H1 (cell line): ENCODE measurements at regions of chr1 and their contacts with region 1.

Region 1: GRCh38 chr1:12078938-12079861 is 16.1 kb downstream of the TNFRSF8 start:
- DNase-seq: peak in 1 of 2 experiments; percentile 86
- H3K4me3 ChIP-seq: peak overlapping the region in 3 of 4 experiments; percentile 18 to 44 (median 34); a peak in 5 of 8 replicates
- H3K27ac ChIP-seq: no peak overlapping the region; the same call in 1 of the 2 replicates
- H3K4me1 ChIP-seq: peaks cover 3 to 22% (median 6%) of the 10 kb centered on the region in 4 experiments
- H3K27me3 ChIP-seq: no peaks in the 10 kb centered on the region
- CTCF ChIP-seq: peak; percentile 73 to 90 (median 80)
- EP300 ChIP-seq: no peak
- POLR2A ChIP-seq: peak in 1 of 2 experiments; percentile 33; a peak in 2 of 3 replicates
- RAD21 ChIP-seq: peak; percentile 57 to 70

Region 2: GRCh38 chr1:11979851-11980675 is 99.1 kb before region 1 on chr1 and contains the start of gene MFN2:
- CTCF ChIA-PET with region 1: no interaction called
- POLR2A ChIA-PET with region 1: interaction called, 10 read pairs
- DNase-seq: peak; percentile 97
- H3K4me3 ChIP-seq: peak within 1 kb of the TSS; percentile 78 to 94 (median 84)
- H3K27ac ChIP-seq: peak within 1 kb of the TSS; percentile 96
- H3K4me1 ChIP-seq: peaks cover 0 to 5% (median 2%) of the 10 kb centered on the region in 4 experiments; a peak in 3 of 7 replicates
- H3K27me3 ChIP-seq: no peaks in the 10 kb centered on the region
- CTCF ChIP-seq: no peak
- EP300 ChIP-seq: 0 out of 3 replicates have a peak, but pooled peaks of 1 of the 2 experiments have one; percentile 6
- POLR2A ChIP-seq: peak; percentile 91 to 95
- RAD21 ChIP-seq: no peak
- total RNA-seq, gene MFN2: 58.2 and 62.5 TPM in 2 replicates

Region 3: GRCh38 chr1:12031039-12031980 is 47.9 kb before region 1 on chr1:
- CTCF ChIA-PET with region 1: interaction called, 19 read pairs
- POLR2A ChIA-PET with region 1: interaction called, 3 read pairs
- DNase-seq: peak in 1 of 2 experiments; percentile 73
- H3K4me3 ChIP-seq: no peak overlapping the region
- H3K27ac ChIP-seq: no peak overlapping the region
- H3K4me1 ChIP-seq: no peaks in the 10 kb centered on the region; a peak in 1 of 7 replicates
- H3K27me3 ChIP-seq: no peaks in the 10 kb centered on the region
- CTCF ChIP-seq: peak; percentile 68 to 73 (median 69)
- EP300 ChIP-seq: no peak
- POLR2A ChIP-seq: no peak
- RAD21 ChIP-seq: peak; percentile 67 to 73

Region 4: GRCh38 chr1:12057382-12057781 is 21.8 kb before region 1 on chr1:
- CTCF ChIA-PET with region 1: interaction called, 23 read pairs
- POLR2A ChIA-PET with region 1: interaction called, 6 read pairs
- DNase-seq: no peak
- H3K4me3 ChIP-seq: no peak overlapping the region
- H3K27ac ChIP-seq: no peak overlapping the region
- H3K4me1 ChIP-seq: peaks cover 0 to under 1% (median 0%) of the 10 kb centered on the region in 4 experiments; a peak in 1 of 7 replicates
- H3K27me3 ChIP-seq: peaks cover 0 to 4% (median 0%) of the 10 kb centered on the region in 4 experiments; a peak in 3 of 7 replicates
- CTCF ChIP-seq: no peak
- EP300 ChIP-seq: no peak
- POLR2A ChIP-seq: no peak
- RAD21 ChIP-seq: no peak

Region 5: GRCh38 chr1:12107736-12108135 is 28.5 kb after region 1 on chr1:
- CTCF ChIA-PET with region 1: interaction called, 10 read pairs
- POLR2A ChIA-PET with region 1: no interaction called
- DNase-seq: no peak
- H3K4me3 ChIP-seq: no peak overlapping the region
- H3K27ac ChIP-seq: no peak overlapping the region
- H3K4me1 ChIP-seq: no peaks in the 10 kb centered on the region
- H3K27me3 ChIP-seq: no peaks in the 10 kb centered on the region
- CTCF ChIP-seq: no peak
- EP300 ChIP-seq: no peak
- POLR2A ChIP-seq: no peak
- RAD21 ChIP-seq: no peak

Region 6: GRCh38 chr1:12272770-12273169 is 193.6 kb after region 1 on chr1:
- CTCF ChIA-PET with region 1: no interaction called
- POLR2A ChIA-PET with region 1: no interaction called
- DNase-seq: no peak
- H3K4me3 ChIP-seq: no peak overlapping the region
- H3K27ac ChIP-seq: no peak overlapping the region
- H3K4me1 ChIP-seq: peaks cover 0 to 5% (median 0%) of the 10 kb centered on the region in 4 experiments; a peak in 1 of 7 replicates
- H3K27me3 ChIP-seq: no peaks in the 10 kb centered on the region
- CTCF ChIP-seq: no peak
- EP300 ChIP-seq: no peak
- POLR2A ChIP-seq: no peak
- RAD21 ChIP-seq: no peak